ENCODE measurements at regions of chr11 and their contacts with region 1.

Region 1: DNA sequence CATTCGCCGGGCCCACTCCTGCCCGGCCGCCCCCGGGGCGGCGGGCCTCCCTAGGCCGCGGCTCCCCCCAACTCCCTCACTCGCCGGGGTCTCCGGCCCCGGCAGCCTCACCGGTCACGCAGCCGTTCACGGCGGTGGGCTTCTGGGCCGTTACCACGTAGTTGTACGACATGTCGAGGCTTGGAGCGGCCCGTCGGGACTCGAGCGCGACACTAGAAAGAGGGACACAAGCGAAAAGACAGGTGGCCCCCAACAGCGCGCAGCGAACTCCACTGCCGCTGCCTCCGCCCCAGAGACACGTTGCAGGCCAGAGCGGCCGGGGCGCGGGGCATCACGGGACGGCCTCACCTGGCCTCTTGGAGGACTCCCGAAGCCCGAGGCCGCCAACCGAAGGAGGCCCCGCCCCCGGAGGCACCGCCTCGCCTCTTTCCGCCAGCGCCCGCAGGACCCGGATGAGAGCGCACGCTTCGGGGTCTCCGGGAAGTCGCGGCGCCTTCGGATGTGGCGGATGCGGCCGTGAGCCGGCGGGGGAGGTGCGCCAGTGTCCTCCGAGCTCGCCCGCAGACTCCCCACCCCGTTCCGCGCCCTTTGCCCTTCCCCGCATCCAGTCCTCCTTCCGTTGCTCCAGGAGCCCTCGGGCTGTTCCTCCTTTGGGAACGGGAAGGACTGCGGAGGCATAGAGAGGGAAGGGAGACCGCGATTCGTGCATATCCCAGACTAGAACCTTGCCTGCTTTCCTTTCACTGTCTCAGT is at the starts of genes DDB1 and TKFC:
- DNase-seq: peak; percentile 100
- H3K4me3 Mint-ChIP-seq: peak within 1 kb of the TSS; percentile 97
- H3K27ac Mint-ChIP-seq: peak within 1 kb of the TSS; percentile 98
- H3K4me1 Mint-ChIP-seq: peaks cover 56% of the 10 kb centered on the region
- H3K27me3 Mint-ChIP-seq: no peaks in the 10 kb centered on the region
- total RNA-seq, gene DDB1: 265 and 268 TPM in 2 replicates
- total RNA-seq, gene TKFC: 81.7 and 84.7 TPM in 2 replicates

Region 2: DNA sequence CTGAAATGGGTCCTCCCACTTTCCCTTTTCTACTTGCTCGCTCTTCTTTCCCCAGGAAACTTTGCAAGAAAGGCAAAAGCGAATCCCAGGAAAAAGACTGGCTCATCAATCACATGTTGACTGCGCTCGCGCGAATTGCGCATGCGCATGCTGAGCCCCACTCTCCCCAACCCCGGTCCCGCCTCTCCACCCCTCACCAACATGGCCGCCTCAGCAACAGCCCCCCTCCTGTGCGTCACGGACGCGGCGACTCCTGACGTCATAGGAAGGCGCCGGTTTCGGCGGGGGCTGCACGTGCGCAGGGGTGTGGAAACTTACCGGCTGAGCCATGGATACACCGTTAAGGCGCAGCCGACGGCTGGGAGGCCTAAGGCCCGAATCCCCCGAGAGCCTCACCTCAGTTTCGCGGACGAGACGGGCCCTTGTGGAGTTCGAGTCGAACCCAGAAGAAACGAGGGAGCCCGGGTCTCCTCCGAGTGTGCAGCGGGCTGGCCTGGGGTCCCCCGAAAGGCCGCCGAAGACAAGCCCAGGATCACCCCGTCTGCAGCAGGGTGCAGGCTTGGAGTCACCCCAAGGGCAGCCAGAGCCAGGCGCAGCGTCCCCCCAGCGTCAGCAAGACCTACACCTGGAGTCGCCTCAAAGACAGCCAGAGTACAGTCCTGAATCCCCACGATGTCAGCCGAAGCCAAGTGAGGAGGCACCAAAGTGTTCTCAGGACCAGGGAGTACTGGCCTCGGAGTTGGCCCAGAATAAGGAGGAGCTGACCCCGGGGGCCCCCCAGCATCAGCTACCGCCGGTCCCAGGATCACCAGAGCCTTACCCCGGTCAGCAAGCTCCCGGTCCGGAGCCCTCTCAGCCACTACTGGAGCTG is 490.9 kb before region 1 on chr11 and contains the start of gene CCDC86:
- intact Hi-C with region 1: loop called (anchors 5 kb)
- DNase-seq: peak; percentile 100
- H3K4me3 Mint-ChIP-seq: peak within 1 kb of the TSS; percentile 95
- H3K27ac Mint-ChIP-seq: peak within 1 kb of the TSS; percentile 95
- H3K4me1 Mint-ChIP-seq: peaks cover 36% of the 10 kb centered on the region
- H3K27me3 Mint-ChIP-seq: no peaks in the 10 kb centered on the region
- total RNA-seq, gene CCDC86: 90.0 and 91.3 TPM in 2 replicates

Region 3: DNA sequence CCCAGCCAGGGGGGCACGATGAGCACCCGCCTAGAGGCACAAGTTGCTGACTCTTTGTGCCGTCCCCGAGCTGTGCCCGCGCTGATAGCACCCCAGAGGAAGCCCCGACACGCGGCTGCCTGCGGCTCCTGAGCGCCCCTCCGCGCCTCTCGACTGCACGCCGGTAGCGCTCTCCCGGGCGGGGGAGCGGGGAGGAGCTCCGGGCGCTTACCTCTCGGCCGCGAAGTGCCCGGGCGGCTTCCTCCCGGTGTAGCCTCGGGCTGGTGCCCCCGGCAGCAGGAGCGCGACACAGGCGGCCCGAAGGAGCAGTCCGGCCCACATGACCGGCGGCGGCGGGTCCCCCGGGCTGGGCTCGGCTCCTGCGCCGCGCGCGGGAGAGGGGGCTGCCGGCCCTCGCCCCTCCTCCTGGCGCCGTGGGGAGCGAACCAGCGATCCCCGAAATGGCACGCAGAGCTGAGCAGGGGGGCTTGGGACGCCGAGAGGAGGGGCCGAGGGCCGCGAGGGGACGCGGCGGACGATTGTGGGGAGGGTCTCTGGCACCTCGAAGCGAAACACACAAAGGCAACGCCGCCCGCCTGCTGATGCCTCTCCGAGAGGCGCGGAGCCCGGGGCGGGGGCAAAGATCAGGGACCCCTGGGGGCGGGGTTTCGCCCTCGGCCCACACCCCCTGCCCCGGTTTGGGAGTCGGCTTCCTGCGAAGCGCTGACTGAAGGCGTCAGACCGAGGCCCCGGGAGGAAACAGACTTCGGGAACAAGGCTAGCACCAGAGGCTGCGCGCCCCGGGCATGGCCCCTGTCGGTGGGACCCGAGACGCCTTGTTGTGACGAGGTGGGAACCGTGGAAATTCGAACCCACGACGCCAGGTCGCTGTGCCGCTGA is 38.0 kb before region 1 on chr11 and contains the start of gene VWCE:
- intact Hi-C with region 1: loop called (anchors 1 kb)
- DNase-seq: peak; percentile 92
- H3K4me3 Mint-ChIP-seq: peak within 1 kb of the TSS; percentile 89
- H3K27ac Mint-ChIP-seq: peak within 1 kb of the TSS; percentile 89
- H3K4me1 Mint-ChIP-seq: peaks cover 23% of the 10 kb centered on the region
- H3K27me3 Mint-ChIP-seq: peaks cover 13% of the 10 kb centered on the region
- total RNA-seq, gene VWCE: 10.6 and 12.4 TPM in 2 replicates

Region 4: DNA sequence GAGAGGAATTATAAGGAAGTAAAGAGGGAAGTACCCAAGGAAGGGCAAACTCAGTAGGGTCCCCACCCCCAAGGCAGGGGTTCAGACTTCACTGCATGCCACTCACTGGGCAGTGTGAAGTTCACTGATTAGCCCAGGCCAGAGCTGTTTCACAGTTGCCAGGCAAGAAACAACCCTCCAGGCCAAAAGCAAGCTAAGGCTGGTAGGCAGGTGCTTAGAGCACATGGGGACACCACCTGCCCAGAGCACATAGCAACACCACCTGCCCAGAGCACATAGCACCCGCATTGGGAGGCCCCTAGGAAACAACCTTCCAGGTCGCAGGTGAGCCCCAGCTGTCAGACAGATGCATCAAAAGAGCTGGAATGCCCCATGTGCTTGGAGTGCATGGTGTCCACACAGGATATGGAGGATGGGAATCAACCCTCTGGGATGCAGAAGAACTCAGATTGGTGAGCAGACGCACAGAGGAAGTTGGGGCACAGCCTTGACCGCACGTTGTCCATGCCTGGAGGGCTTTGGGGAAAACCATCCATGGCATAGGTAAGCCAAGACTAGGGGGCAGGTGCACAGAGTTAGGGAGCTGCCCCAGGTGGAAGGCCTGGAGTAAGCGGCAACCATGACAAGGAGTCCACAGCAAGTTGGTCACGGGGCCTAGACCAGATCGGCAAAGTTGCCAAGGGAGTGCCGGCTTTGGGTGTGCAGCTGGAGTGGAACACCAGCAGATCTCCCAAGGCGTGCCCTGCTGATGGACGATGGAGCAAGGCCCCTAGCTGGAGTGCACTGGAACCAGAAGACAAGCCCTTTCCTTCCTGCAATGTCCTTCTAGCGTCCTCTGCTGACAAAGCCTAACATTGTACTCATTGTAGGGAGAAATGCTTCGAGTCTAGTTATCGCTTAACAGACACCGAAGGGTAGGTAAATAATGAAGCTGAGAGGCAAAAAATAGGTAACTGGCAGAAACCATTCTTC is 51.6 kb after region 1 on chr11:
- intact Hi-C with region 1: loop called (anchors 1 kb)
- DNase-seq: no peak
- H3K4me3 Mint-ChIP-seq: no peak overlapping the region
- H3K27ac Mint-ChIP-seq: no peak overlapping the region
- H3K4me1 Mint-ChIP-seq: peaks cover 6% of the 10 kb centered on the region
- H3K27me3 Mint-ChIP-seq: no peaks in the 10 kb centered on the region

Region 5: DNA sequence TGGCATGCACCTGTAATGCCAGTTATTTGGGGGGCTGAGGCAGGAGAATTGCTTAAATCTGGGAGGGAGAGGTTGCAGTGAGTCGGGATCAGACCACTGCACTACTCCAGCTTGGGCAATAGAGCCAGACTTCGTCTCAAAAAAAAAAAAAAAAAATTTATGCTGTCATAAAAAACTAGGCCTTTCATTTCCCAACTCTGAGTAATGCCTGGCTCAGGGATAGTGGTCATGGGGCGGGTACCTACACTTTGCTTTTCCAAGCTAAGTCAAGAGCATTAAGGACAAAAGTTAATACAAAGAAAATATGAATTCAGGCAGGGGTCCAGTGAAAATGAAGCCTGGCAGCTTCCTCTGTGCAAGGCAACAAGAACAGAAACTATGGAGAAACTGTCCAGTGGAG is 80.5 kb after region 1 on chr11:
- intact Hi-C with region 1: no loop called
- DNase-seq: no peak
- H3K4me3 Mint-ChIP-seq: no peak overlapping the region
- H3K27ac Mint-ChIP-seq: no peak overlapping the region
- H3K4me1 Mint-ChIP-seq: peaks cover 29% of the 10 kb centered on the region
- H3K27me3 Mint-ChIP-seq: no peaks in the 10 kb centered on the region

Region 6: DNA sequence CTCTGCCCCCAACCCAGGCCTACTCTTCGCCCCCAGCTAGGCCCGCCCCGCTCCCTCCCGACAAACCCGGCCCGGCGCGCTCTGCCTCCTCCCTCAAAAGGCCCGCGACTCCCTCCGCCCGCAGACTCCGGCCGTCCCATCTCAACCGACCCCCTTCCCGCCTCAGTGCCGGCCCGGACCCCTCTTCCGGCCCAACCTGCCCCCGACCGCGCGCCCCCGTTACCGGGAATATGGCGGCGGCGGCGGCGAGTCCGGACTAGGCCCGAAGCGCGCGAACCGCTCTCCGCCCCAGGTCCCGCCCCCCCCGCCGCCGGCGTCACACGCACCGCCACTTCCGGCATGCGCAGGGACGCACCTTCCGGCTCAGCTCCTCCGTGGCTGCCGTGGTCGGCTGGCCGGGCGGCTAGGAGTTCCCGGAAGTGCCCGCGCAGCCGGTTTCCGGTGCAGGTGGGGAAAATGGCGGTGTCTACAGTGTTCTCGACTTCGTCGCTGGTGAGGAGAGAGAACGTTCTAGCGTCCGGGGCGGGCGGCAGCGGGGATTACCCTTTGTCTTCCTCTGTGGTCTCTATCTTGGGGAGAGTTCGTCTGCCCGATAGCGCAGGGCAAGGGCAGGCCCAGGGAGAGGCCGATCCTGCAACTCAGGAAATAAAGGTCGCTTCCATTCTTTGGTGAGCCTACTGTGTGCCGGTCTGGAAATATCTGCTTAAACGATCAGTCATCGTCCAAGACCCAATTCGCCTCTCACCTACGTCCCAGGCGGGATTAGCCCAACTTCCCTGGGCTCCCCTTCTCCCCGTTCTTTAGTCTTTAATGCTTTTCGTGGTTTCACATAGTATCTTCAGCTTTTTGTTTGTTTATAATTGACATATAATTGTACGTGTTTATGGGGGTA is 97.0 kb after region 1 on chr11 and contains the starts of genes CPSF7 and SDHAF2:
- intact Hi-C with region 1: loop called (anchors 1 kb)
- DNase-seq: peak; percentile 99
- H3K4me3 Mint-ChIP-seq: peak within 1 kb of the TSS; percentile 97
- H3K27ac Mint-ChIP-seq: peak within 1 kb of the TSS; percentile 98
- H3K4me1 Mint-ChIP-seq: peaks cover 43% of the 10 kb centered on the region
- H3K27me3 Mint-ChIP-seq: no peaks in the 10 kb centered on the region
- total RNA-seq, gene CPSF7: 140 and 143 TPM in 2 replicates
- total RNA-seq, gene SDHAF2: 46.0 and 46.1 TPM in 2 replicates